MCF 10A (cell line): ENCODE measurements at regions of chr4 and their contacts with region 1.

Region 1: GRCh38 chr4:175419239-175419767 is 392.8 kb downstream of the GPM6A start:
- DNase-seq: peak; percentile 90
- H3K4me3 Mint-ChIP-seq: no peak overlapping the region
- H3K27ac Mint-ChIP-seq: peak overlapping the region; percentile 94
- H3K4me1 Mint-ChIP-seq: peaks cover 40% of the 10 kb centered on the region
- H3K27me3 Mint-ChIP-seq: no peaks in the 10 kb centered on the region
- CTCF ChIP-seq: no peak

Region 2: GRCh38 chr4:175127314-175127713 is 292.0 kb before region 1 on chr4:
- CTCF ChIA-PET with region 1: no interaction called
- POLR2A ChIA-PET with region 1: no interaction called
- intact Hi-C with region 1: loop called (anchors 5 kb)
- DNase-seq: peak; percentile 86
- H3K4me3 Mint-ChIP-seq: no peak overlapping the region
- H3K27ac Mint-ChIP-seq: no peak overlapping the region
- H3K4me1 Mint-ChIP-seq: peaks cover 13% of the 10 kb centered on the region
- H3K27me3 Mint-ChIP-seq: no peaks in the 10 kb centered on the region
- CTCF ChIP-seq: no peak

Region 3: DNA sequence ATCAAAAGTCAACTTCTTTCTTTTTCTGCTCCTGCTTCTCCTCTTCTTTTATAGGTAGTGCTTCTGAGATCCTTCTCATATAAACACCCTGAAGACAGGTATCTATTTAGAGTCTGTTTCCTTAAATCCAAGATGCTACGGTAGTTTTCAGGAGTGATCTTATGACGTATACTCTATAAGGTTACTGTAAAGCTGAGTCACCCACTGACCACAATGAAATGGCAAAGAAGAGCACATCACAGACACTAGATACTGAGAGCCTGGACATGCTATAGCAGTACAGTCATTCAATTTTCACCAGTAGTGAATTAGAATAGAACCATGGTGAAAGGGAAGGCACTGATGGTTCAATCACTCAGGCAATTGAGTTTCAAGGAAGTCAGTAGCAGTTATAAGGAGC is 88.7 kb before region 1 on chr4:
- CTCF ChIA-PET with region 1: no interaction called
- POLR2A ChIA-PET with region 1: no interaction called
- intact Hi-C with region 1: loop called (anchors 1 kb)
- DNase-seq: peak; percentile 73
- H3K4me3 Mint-ChIP-seq: no peak overlapping the region
- H3K27ac Mint-ChIP-seq: no peak overlapping the region
- H3K4me1 Mint-ChIP-seq: peaks cover 8% of the 10 kb centered on the region
- H3K27me3 Mint-ChIP-seq: no peaks in the 10 kb centered on the region
- CTCF ChIP-seq: no peak